ENCODE measurements at regions of chr13 and their contacts with region 1.

Region 1: DNA sequence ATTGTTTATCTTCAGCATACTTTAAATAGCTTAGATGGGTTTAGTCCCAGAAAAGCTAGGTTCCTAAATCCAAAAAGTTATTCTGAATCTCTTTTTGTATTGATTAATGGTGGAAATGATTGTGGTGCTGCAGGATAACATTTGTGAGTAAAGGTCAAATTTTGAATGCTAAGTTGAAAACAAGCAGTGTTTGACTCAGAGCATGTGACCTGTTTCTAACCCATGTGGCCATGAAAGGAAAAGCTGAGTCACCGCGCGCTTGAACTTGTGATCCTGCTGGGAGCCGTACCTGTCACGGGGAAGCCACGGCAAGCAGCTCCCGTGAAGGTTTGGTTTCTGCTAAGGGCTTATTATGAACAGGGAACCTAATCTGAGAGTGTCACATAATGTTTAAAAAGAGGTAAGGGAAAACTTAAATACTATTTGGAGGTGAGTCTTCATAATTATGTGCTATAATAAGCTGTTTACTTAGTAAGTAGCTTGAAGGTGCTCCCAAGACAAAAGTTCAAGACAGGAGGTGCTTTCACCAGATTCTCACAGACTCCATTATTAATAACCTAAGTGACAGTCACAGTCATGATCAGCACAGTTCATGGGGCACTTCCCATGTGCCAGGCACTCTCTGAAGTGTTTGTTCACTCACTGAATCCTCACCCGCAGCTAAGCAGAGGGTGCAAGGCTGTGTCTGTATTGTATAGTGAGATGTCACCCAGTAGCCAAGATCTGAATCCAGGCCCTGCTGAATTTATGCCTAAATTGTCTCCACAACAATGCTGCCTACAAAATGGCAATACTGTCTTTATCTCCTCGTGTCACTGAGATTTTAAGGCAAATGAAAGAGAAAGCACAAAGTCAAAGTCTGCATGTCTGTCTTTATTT is 286.5 kb downstream of the MYO16 start:
- DNase-seq: peak; percentile 93 to 95
- ATAC-seq: peak; percentile 90
- H3K4me3 ChIP-seq: peak overlapping the region in 1 of 2 donors; percentile 47
- H3K27ac ChIP-seq: peak overlapping the region; percentile 94 to 98
- H3K4me1 ChIP-seq: no peaks in the 10 kb centered on the region
- H3K27me3 ChIP-seq: no peaks in the 10 kb centered on the region

Region 2: DNA sequence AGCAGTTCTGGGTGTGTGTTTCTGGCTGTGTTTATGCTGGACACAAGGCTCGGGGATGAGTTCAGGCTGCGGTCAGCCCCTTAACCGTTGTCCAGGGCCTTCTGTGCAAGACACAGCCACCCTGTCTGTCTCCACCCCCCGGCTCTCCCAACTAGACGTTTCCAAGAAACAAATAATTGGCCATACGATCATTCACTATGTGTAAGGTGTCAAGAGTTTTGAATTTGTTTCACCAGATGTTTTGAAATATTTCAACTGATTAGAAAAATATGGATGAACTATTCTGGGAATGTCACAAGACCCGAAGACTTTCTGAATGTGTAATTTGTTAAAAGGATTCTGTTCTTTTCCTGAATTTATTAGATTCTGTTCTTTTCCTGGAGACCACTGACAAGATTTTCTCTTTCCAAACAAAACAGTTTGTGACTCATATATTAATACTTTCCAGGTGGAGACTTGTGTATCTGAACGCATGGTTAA is 31.7 kb after region 1 on chr13:
- intact Hi-C with region 1: no loop called
- DNase-seq: peak in 1 of 2 donors; percentile 66
- ATAC-seq: peak; percentile 86
- H3K4me3 ChIP-seq: no peak overlapping the region
- H3K27ac ChIP-seq: no peak overlapping the region
- H3K4me1 ChIP-seq: no peaks in the 10 kb centered on the region
- H3K27me3 ChIP-seq: no peaks in the 10 kb centered on the region

Region 3: GRCh38 chr13:108961542-108962125 is 45.8 kb after region 1 on chr13:
- intact Hi-C with region 1: loop called in 1 of 2 experiments (anchors 5 kb)
- DNase-seq: no peak
- ATAC-seq: peak; percentile 83
- H3K4me3 ChIP-seq: no peak overlapping the region
- H3K27ac ChIP-seq: no peak overlapping the region
- H3K4me1 ChIP-seq: no peaks in the 10 kb centered on the region
- H3K27me3 ChIP-seq: no peaks in the 10 kb centered on the region